ENCODE measurements at regions of chr2 and their contacts with region 1.

Region 1: GRCh38 chr2:197499594-197500526 is at the starts of genes HSPD1 and HSPE1:
- DNase-seq: peak; percentile 98 to 99 (median 99)
- ATAC-seq: peak; percentile 96 to 98 (median 97)
- H3K4me3 ChIP-seq: peak within 1 kb of the TSS; percentile 56 to 96 (median 81)
- H3K27ac ChIP-seq: peak within 1 kb of the TSS; percentile 79 to 99 (median 96)
- H3K4me1 ChIP-seq: peaks cover 8 to 61% (median 36%) of the 10 kb centered on the region in 12 donors
- H3K27me3 ChIP-seq: no peaks in the 10 kb centered on the region
- CTCF ChIP-seq: peak in 1 of 12 donors; percentile 14
- POLR2A ChIP-seq: peak; percentile 19 to 89
- total RNA-seq, gene HSPD1: 86.7 to 154 (median 118) TPM
- total RNA-seq, gene HSPE1: 75.0 to 136 (median 102) TPM

Region 2: DNA sequence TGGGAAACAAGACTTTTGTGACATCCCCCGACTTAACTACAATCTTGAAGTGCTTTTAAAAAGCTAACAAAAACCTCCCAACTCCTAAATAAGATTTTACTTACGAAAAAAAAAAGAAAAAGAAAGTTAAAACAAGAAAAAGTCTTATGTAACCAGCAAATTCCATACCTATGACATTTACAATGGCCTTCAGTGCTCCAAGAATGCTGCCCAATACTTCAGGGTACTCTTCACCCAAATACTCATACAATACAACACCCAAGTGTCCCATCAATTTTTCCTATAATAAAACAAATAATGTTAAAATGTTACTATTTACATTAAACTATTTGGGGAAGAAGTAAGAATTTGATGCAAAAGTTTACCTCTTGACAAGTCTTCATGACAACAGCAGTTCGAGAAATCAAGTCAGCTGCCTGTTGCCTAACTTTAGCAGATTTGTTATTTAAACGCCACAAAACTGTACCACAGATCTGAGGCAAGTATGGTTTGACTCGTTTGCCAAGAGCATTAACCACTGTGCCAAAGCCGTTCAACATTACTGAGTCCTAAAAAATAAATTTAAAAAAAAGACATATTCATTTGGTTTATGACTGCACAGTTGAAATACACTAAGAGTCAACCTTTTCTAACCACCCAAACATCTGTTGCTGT is 99.8 kb before region 1 on chr2:
- intact Hi-C with region 1: loop called in 2 of 10 experiments (anchors 10 kb)
- DNase-seq: no peak
- ATAC-seq: no peak
- H3K4me3 ChIP-seq: no peak overlapping the region
- H3K27ac ChIP-seq: no peak overlapping the region
- H3K4me1 ChIP-seq: no peaks in the 10 kb centered on the region
- H3K27me3 ChIP-seq: no peaks in the 10 kb centered on the region
- CTCF ChIP-seq: no peak
- POLR2A ChIP-seq: no peak

Region 3: DNA sequence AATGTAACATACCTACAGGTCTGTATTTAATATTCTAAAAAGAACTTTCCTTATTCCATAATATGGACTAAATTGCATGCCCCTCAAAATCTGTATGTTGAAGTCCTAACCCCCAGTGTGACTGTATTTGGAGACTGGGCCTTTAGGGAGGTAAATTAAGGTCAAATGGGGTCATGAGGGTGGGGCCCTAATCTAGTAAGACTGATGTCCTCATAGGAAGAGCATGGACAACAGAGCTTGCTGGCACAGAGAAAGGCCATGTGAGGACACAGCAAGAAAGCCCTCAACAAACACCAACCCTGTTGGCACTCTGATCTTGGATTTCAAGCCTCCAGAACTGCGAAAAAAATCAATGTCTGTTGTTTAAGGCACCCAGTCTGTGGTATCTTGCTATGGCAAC is 83.6 kb before region 1 on chr2:
- intact Hi-C with region 1: loop called in 1 of 10 experiments (anchors 10 kb)
- DNase-seq: no peak
- ATAC-seq: no peak
- H3K4me3 ChIP-seq: no peak overlapping the region
- H3K27ac ChIP-seq: no peak overlapping the region
- H3K4me1 ChIP-seq: peaks cover 0 to 12% (median 2%) of the 10 kb centered on the region in 12 donors
- H3K27me3 ChIP-seq: no peaks in the 10 kb centered on the region
- CTCF ChIP-seq: no peak
- POLR2A ChIP-seq: no peak

Region 4: DNA sequence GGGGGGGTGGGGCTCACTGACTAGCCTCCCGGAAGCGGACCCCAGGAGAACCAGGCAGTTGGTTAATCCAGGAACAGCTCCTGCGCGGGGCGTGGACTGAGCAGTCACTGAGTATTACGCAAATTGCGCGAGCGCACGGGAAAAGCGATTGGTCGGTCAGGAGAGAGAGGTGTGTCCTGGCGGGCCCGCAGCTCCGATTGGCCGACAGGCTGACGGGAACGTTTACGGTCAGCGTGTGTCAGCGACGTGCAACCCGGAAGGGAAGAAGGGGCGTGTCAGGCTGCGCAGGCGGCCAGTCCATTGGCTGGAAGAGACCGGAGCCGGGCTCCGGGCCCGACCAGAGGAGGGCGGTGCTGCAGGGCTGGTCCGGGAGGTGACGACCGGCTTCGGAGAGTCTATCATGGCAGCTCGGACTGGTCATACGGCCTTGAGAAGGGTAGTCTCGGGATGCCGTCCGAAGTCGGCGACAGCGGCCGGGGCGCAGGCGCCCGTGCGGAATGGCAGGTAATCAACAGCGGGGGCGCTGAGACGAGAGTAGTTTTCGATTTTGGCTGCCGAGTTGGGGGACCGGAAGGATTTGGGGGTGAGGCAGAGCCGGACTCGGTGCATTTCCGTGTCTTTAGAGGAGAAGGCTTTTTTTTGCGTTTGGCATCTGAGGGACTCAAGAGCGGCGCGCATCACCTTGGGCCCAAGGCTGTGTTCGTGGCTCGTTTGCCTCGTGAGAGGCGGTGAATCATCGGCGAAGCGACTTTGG is 46.5 kb before region 1 on chr2 and contains the start of gene COQ10B:
- intact Hi-C with region 1: loop called in 7 of 10 experiments (anchors 1 to 10 kb)
- DNase-seq: peak; percentile 99 to 100 (median 100)
- ATAC-seq: peak; percentile 98 to 99 (median 98)
- H3K4me3 ChIP-seq: peak within 1 kb of the TSS; percentile 44 to 98 (median 78)
- H3K27ac ChIP-seq: peak within 1 kb of the TSS; percentile 88 to 100 (median 98)
- H3K4me1 ChIP-seq: peaks cover 0 to 45% (median 19%) of the 10 kb centered on the region in 12 donors
- H3K27me3 ChIP-seq: no peaks in the 10 kb centered on the region
- CTCF ChIP-seq: peak in 11 of 12 donors; percentile 6 to 71 (median 42)
- POLR2A ChIP-seq: peak; percentile 36 to 89
- total RNA-seq, gene COQ10B: 26.6 to 39.9 (median 33.8) TPM

Region 5: DNA sequence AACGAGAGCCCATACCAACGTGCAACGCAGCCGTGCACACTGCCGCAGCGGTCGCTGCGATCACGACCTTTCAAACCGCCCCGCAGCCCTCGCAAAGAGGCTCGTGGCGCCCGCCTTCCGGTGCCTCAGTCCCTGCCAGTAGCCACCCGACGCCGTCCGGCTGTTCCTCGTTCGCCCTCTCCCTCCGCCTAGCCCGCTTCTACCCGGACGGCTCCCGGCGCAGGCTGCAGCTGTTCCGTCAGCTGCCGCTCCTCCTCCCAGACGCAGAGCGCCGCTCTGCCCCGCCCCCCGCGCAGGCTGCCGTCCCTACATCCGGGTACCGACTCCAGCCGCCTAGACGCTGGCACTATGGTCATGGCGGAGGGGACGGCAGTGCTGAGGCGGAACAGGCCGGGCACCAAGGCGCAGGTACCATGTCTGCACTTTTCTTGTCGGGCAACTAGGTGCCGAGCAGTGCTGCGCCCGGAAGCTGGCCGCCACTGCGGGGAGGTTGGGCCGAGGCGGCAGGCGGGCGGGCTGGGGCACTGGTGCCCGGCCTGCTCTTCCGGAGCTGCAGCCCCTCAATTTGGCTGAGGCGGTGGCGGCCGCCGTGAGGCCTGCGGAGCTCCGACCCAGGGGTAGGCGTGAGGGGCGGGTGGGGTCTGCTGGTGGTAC is 16.0 kb after region 1 on chr2 and contains the start of gene MOB4:
- intact Hi-C with region 1: loop called in 6 of 10 experiments (anchors 1 to 2 kb)
- DNase-seq: peak; percentile 96 to 98 (median 97)
- ATAC-seq: peak; percentile 98 to 99 (median 99)
- H3K4me3 ChIP-seq: peak within 1 kb of the TSS; percentile 73 to 99 (median 94)
- H3K27ac ChIP-seq: peak within 1 kb of the TSS; percentile 69 to 99 (median 96)
- H3K4me1 ChIP-seq: peaks cover 0 to 41% (median 23%) of the 10 kb centered on the region in 12 donors
- H3K27me3 ChIP-seq: no peaks in the 10 kb centered on the region
- CTCF ChIP-seq: no peak
- POLR2A ChIP-seq: peak; percentile 8 to 96
- total RNA-seq, gene MOB4: 25.6 to 40.9 (median 35.2) TPM

Measured in heart left ventricle (tissue), 16 donors.